ENCODE measurements at regions of chr9 and their contacts with region 1.

Region 1: GRCh38 chr9:34989003-34989945 is at the start of gene DNAJB5:
- DNase-seq: peak; percentile 96 to 99 (median 98)
- H3K4me3 ChIP-seq: peak within 1 kb of the TSS; percentile 47 to 83
- H3K4me3 Mint-ChIP-seq: peak within 1 kb of the TSS; percentile 90 to 99 (median 94)
- H3K27ac ChIP-seq: peak within 1 kb of the TSS; percentile 69
- H3K27ac Mint-ChIP-seq: peak within 1 kb of the TSS; percentile 84 to 95 (median 94)
- H3K4me1 ChIP-seq: peaks cover 42% of the 10 kb centered on the region
- H3K4me1 Mint-ChIP-seq: peaks cover 28 to 62% (median 48%) of the 10 kb centered on the region in 4 donors
- H3K27me3 ChIP-seq: no peaks in the 10 kb centered on the region
- H3K27me3 Mint-ChIP-seq: no peaks in the 10 kb centered on the region
- total RNA-seq, gene DNAJB5: 0.73 to 0.97 TPM

Region 2: GRCh38 chr9:33024966-33025571 is 1964.2 kb before region 1 on chr9 and contains the start of gene DNAJA1:
- CTCF ChIA-PET with region 1: no interaction called
- POLR2A ChIA-PET with region 1: no interaction called
- intact Hi-C with region 1: loop called (anchors 5 kb)
- DNase-seq: peak; percentile 92 to 98 (median 97)
- H3K4me3 ChIP-seq: peak within 1 kb of the TSS; percentile 96 to 100
- H3K4me3 Mint-ChIP-seq: peak within 1 kb of the TSS; percentile 92 to 99 (median 96)
- H3K27ac ChIP-seq: peak within 1 kb of the TSS; percentile 100
- H3K27ac Mint-ChIP-seq: peak within 1 kb of the TSS; percentile 94 to 98 (median 97)
- H3K4me1 ChIP-seq: peaks cover 63% of the 10 kb centered on the region
- H3K4me1 Mint-ChIP-seq: peaks cover 41 to 82% (median 66%) of the 10 kb centered on the region in 4 donors
- H3K27me3 ChIP-seq: no peaks in the 10 kb centered on the region
- H3K27me3 Mint-ChIP-seq: no peaks in the 10 kb centered on the region
- total RNA-seq, gene DNAJA1: 79.8 to 84.4 TPM

Region 3: DNA sequence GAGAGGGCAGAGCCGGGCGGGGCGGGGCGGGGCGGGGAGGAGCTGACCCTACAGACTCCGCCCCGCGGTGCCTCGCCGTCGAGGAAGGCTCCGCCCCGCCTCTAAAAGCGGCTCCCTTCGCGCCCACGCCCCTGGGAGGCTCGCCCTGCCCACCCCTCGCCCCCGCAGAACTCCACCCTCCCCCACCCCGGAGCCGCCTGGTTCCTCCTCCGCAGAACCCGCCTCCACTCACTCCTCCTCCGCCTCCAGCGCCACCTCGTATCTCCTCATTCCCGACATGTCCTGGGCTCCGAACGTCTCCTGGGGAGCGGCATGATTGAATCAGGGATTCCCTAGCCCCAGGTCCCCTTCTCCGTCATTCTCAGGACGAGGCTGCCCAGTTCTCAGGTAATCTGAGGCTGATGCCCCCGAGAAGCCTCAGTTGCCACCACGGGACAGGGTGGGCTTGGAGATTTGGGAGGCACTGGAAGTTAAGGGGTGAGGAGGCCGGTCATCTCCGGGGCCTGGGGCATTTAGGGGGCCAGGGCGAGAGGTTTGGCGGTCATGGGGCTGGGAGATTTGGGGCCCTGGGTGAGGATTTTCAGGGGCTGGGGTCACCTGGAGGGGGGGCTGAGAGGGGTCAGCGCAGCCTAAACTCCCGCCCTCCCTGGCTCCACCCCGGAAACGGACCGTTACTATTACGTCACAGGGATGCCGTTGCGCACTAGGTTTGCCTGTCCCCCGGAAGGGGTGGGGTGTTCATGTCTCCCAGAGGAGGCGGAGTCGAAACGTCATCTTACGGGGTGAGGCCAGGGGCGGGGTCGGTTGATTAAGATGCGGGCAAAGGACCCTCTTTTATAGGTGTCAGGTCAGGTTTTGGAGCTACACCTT is 323.7 kb before region 1 on chr9:
- CTCF ChIA-PET with region 1: no interaction called
- POLR2A ChIA-PET with region 1: no interaction called
- intact Hi-C with region 1: loop called (anchors 2 kb)
- DNase-seq: peak; percentile 87 to 94 (median 89)
- H3K4me3 ChIP-seq: peak overlapping the region; percentile 75 to 95
- H3K4me3 Mint-ChIP-seq: peak overlapping the region; percentile 85 to 97 (median 93)
- H3K27ac ChIP-seq: peak overlapping the region; percentile 98
- H3K27ac Mint-ChIP-seq: peak overlapping the region; percentile 95 to 99 (median 99)
- H3K4me1 ChIP-seq: peaks cover 59% of the 10 kb centered on the region
- H3K4me1 Mint-ChIP-seq: peaks cover 41 to 65% (median 53%) of the 10 kb centered on the region in 4 donors
- H3K27me3 ChIP-seq: no peaks in the 10 kb centered on the region
- H3K27me3 Mint-ChIP-seq: no peaks in the 10 kb centered on the region

Region 4: DNA sequence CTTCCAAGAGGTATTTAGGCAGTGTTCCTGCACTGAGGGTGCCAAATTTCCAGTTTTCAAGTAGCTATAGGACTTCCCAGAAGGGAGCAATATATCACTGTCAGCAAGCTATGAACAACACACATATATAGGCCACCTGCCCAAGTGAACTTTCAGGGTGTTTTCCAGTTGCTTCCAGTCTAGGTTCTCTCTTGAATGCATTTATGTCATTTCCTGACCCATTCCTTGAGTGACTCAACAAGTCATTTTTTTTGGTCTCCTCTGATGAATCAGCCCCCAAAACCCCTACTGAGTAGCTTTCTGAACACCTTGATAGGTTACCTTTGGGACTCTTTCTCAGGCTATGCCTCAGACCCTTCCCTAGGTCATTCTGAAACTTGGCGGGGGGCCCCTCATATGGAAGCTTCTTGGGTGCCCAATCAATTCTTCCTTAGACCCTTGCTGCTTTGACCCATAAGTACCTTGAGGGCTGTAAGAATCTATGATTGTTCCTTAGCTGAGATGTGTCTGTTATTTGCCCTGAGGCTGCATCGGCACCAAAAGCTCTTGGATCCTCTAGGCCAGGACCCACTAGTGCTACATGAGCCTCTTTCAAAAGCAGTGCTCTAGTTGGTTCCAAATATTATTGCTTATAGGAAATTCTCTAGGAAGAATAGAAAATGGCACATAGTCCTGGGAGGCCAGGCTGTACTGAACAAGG is 12.7 kb after region 1 on chr9:
- CTCF ChIA-PET with region 1: interaction called, 10 read pairs
- POLR2A ChIA-PET with region 1: no interaction called
- intact Hi-C with region 1: no loop called
- DNase-seq: no peak
- H3K4me3 ChIP-seq: no peak overlapping the region
- H3K4me3 Mint-ChIP-seq: no peak overlapping the region
- H3K27ac ChIP-seq: no peak overlapping the region
- H3K27ac Mint-ChIP-seq: no peak overlapping the region
- H3K4me1 ChIP-seq: no peaks in the 10 kb centered on the region
- H3K4me1 Mint-ChIP-seq: no peaks in the 10 kb centered on the region
- H3K27me3 ChIP-seq: no peaks in the 10 kb centered on the region
- H3K27me3 Mint-ChIP-seq: no peaks in the 10 kb centered on the region

Region 5: DNA sequence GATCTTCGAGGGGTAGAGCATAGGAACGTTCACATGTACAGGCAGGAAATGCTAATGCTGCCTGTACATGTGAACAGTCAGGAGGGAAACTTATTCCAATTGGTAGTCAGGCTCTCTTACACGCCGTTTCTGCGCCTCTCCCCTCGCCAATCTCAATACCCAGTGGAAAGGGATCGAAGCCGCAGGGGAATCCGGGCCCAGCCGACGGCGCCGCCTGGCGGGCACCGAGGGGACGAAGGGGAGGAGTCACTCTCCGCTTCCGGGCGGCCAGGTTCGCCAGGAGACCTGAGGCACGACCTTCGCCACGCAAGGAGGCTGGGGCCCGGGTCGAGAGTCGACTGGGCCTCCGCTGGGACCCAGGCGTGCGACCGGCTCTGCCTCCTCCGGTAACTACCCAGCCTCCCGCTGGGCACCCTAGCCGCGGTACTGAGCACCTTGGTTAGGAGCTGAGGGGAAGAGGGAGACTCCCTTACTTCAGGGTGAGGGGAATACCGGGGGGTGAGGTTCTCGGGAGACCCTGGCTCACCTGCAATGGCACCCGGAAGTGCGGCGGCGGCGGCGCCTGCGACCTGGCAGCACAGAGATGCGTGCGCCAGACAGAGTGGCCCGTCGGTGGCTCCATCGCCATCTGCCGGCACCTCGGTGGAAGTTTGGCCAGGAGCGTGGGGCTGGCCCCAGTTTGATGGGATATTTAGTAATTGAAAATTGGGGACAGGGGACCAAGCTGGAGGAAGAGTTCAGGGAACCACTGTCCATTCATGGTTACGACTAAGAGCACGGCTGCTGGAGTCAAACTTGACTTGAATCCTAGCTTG is 107.0 kb after region 1 on chr9 and contains the start of gene PIGO:
- CTCF ChIA-PET with region 1: interaction called, 4 read pairs
- POLR2A ChIA-PET with region 1: no interaction called
- intact Hi-C with region 1: loop called (anchors 2 kb)
- DNase-seq: peak; percentile 89 to 92 (median 92)
- H3K4me3 ChIP-seq: peak within 1 kb of the TSS; percentile 87
- H3K4me3 Mint-ChIP-seq: peak within 1 kb of the TSS; percentile 85 to 91 (median 86)
- H3K27ac ChIP-seq: peak within 1 kb of the TSS; percentile 92
- H3K27ac Mint-ChIP-seq: peak within 1 kb of the TSS; percentile 91 to 99 (median 94)
- H3K4me1 ChIP-seq: peaks cover 15% of the 10 kb centered on the region
- H3K4me1 Mint-ChIP-seq: peaks cover 17 to 60% (median 34%) of the 10 kb centered on the region in 4 donors
- H3K27me3 ChIP-seq: no peaks in the 10 kb centered on the region
- H3K27me3 Mint-ChIP-seq: no peaks in the 10 kb centered on the region
- total RNA-seq, gene PIGO: 23.4 to 29.7 TPM

Region 6: GRCh38 chr9:35111001-35111933 is 122.0 kb after region 1 on chr9:
- CTCF ChIA-PET with region 1: no interaction called
- POLR2A ChIA-PET with region 1: no interaction called
- intact Hi-C with region 1: loop called (anchors 1 kb)
- DNase-seq: peak; percentile 91 to 98 (median 94)
- H3K4me3 ChIP-seq: peak overlapping the region; percentile 47 to 54
- H3K4me3 Mint-ChIP-seq: peak overlapping the region; percentile 67 to 94 (median 81)
- H3K27ac ChIP-seq: peak overlapping the region; percentile 82
- H3K27ac Mint-ChIP-seq: peak overlapping the region; percentile 88 to 96 (median 91)
- H3K4me1 ChIP-seq: peaks cover 52% of the 10 kb centered on the region
- H3K4me1 Mint-ChIP-seq: peaks cover 41 to 63% (median 47%) of the 10 kb centered on the region in 4 donors
- H3K27me3 ChIP-seq: no peaks in the 10 kb centered on the region
- H3K27me3 Mint-ChIP-seq: no peaks in the 10 kb centered on the region